OCI-LY7 (cell line): ENCODE measurements at regions of chr7 and their contacts with region 1.

Region 1: GRCh38 chr7:69825113-69825616 is 226.9 kb downstream of the AUTS2 start:
- DNase-seq: peak; percentile 74
- H3K4me3 ChIP-seq: peak overlapping the region; percentile 69
- H3K27ac ChIP-seq: peak overlapping the region; percentile 99
- H3K4me1 ChIP-seq: peaks cover 78% of the 10 kb centered on the region
- CTCF ChIP-seq: peak; percentile 75

Region 2: GRCh38 chr7:69211739-69212138 is 613.4 kb before region 1 on chr7:
- CTCF ChIA-PET with region 1: no interaction called
- POLR2A ChIA-PET with region 1: no interaction called
- intact Hi-C with region 1: loop called (anchors 5 kb)
- DNase-seq: peak; percentile 82
- H3K4me3 ChIP-seq: no peak overlapping the region
- H3K27ac ChIP-seq: no peak overlapping the region
- H3K4me1 ChIP-seq: peaks cover 30% of the 10 kb centered on the region
- CTCF ChIP-seq: peak; percentile 75

Region 3: DNA sequence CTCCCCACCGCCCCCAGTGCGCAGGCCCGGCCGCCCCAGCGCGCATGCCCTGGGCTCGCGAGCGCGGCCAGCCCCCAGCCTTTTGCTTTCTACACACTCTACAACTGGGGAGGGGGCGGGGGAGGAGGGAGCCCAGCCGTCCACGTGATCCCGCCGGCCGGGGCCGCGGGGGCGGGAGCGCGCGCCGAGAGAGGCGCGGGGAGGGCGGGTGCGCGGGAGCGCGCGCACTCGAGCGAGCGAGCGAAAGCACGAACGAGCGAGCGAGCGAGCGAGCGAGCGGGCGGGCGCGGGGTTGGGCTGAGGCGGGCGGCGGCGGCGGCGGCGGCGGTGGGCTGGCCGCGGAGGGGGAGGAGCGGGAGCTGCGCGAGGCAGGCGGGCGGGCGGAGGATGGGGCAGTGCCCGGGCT is 227.1 kb before region 1 on chr7 and contains the start of gene AUTS2:
- CTCF ChIA-PET with region 1: no interaction called
- POLR2A ChIA-PET with region 1: interaction called, 5 read pairs
- intact Hi-C with region 1: loop called (anchors 1 kb)
- DNase-seq: peak; percentile 94
- H3K4me3 ChIP-seq: peak within 1 kb of the TSS; percentile 97
- H3K27ac ChIP-seq: peak within 1 kb of the TSS; percentile 58
- H3K4me1 ChIP-seq: peaks cover 35% of the 10 kb centered on the region
- CTCF ChIP-seq: no peak
- total RNA-seq, gene AUTS2: 34.3 and 37.9 TPM in 2 replicates

Region 4: DNA sequence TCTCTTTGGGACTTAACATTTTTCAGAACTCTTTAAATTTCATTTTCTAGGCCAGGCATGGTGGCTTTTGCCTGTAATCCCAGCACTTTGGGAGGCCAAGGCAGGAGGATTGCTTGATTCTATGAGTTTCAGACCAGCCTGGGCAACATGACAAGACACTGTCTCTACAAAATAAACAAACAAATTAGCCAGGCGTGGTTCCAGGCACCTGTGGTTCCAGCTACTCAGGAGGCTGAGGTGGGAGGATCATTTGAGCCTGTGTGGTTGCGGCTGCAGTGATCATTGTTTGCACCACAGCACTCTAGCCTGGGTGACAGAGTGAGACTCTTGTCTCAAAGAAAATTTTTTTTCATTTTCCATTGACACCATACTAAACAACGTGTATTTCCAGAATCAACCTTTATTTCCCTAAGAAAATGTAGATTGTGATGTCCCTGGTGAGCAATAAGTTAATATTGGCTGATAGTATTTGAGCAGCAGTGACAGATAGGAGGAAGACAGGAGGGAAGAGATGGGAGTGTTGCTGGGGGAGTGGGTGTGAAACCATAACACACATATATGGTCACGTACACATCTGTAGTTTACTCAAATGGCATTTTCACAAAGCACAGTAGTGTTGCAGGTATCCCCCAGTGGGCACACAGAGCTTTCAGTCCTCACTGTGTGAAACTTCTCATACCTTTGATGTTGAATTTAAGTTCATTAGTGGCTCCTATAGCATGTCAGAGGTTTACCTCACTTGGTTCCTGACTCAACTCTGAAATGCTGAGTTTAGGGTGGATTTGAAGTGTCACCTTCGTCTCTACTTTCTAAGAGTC is 21.3 kb before region 1 on chr7:
- CTCF ChIA-PET with region 1: interaction called, 4 read pairs
- POLR2A ChIA-PET with region 1: interaction called, 60 read pairs
- intact Hi-C with region 1: loop called (anchors 1 kb)
- DNase-seq: peak; percentile 76
- H3K4me3 ChIP-seq: peak overlapping the region; percentile 33
- H3K27ac ChIP-seq: peak overlapping the region; percentile 73
- H3K4me1 ChIP-seq: peaks cover 84% of the 10 kb centered on the region
- CTCF ChIP-seq: no peak

Region 5: DNA sequence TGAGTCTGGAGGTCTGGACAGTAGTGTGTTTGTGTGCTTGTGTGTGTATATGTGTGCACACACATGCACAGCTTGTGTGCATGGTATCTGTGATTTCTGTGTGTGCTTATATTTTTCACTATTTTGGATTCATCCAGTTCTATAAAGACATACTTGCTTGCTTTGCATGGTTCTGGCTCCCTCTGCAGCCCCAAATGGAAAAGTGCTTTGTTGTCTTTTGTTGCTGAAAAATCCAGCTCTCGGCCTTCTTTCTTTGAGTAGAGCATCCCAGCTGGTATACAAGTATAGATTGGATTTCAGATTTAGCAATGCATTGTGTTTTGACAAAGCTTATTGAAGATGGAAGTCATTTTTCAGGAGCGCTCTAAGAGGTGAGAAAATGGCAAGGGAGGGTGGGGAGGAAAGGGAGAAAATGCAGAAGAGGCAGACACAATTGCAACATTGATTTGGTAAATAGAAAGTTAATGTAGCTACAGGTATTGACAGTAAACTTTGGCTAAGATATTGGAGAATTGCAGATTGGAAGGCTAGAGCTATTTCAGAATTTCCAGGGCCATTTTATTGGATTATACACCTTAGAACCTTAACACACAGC is 107.0 kb after region 1 on chr7:
- CTCF ChIA-PET with region 1: no interaction called
- POLR2A ChIA-PET with region 1: interaction called, 3 read pairs
- intact Hi-C with region 1: loop called (anchors 2 kb)
- DNase-seq: peak; percentile 60
- H3K4me3 ChIP-seq: no peak overlapping the region
- H3K27ac ChIP-seq: no peak overlapping the region
- H3K4me1 ChIP-seq: peaks cover 13% of the 10 kb centered on the region
- CTCF ChIP-seq: peak; percentile 92

Region 6: GRCh38 chr7:70693686-70694360 is 868.7 kb after region 1 on chr7:
- CTCF ChIA-PET with region 1: no interaction called
- POLR2A ChIA-PET with region 1: no interaction called
- intact Hi-C with region 1: loop called (anchors 10 kb)
- DNase-seq: peak; percentile 81
- H3K4me3 ChIP-seq: peak overlapping the region; percentile 79
- H3K27ac ChIP-seq: no peak overlapping the region
- H3K4me1 ChIP-seq: peaks cover 23% of the 10 kb centered on the region
- CTCF ChIP-seq: no peak